Heart left ventricle (tissue), 16 donors: ENCODE measurements at regions of chr4 and their contacts with region 1.

Region 1: GRCh38 chr4:94621491-94622080 is 136.2 kb upstream of the BMPR1B start:
- DNase-seq: no peak
- ATAC-seq: peak in 1 of 4 donors; percentile 25
- H3K4me3 ChIP-seq: no peak overlapping the region
- H3K27ac ChIP-seq: no peak overlapping the region
- H3K4me1 ChIP-seq: peaks cover 0 to 14% (median 4%) of the 10 kb centered on the region in 12 donors
- H3K27me3 ChIP-seq: no peaks in the 10 kb centered on the region
- CTCF ChIP-seq: peak; percentile 63 to 84 (median 76)
- POLR2A ChIP-seq: no peak

Region 2: GRCh38 chr4:94304365-94304971 is 317.1 kb before region 1 on chr4:
- intact Hi-C with region 1: loop called in 1 of 10 experiments (anchors 10 kb)
- DNase-seq: no peak
- ATAC-seq: peak in 1 of 4 donors; percentile 70
- H3K4me3 ChIP-seq: no peak overlapping the region
- H3K27ac ChIP-seq: no peak overlapping the region
- H3K4me1 ChIP-seq: peaks cover 0 to 17% (median 5%) of the 10 kb centered on the region in 12 donors
- H3K27me3 ChIP-seq: no peaks in the 10 kb centered on the region
- CTCF ChIP-seq: peak; percentile 39 to 71 (median 54)
- POLR2A ChIP-seq: no peak

Region 3: GRCh38 chr4:94690851-94691254 is 69.3 kb after region 1 on chr4:
- intact Hi-C with region 1: no loop called
- DNase-seq: no peak
- ATAC-seq: no peak
- H3K4me3 ChIP-seq: no peak overlapping the region
- H3K27ac ChIP-seq: no peak overlapping the region
- H3K4me1 ChIP-seq: no peaks in the 10 kb centered on the region
- H3K27me3 ChIP-seq: no peaks in the 10 kb centered on the region
- CTCF ChIP-seq: no peak
- POLR2A ChIP-seq: no peak

Region 4: DNA sequence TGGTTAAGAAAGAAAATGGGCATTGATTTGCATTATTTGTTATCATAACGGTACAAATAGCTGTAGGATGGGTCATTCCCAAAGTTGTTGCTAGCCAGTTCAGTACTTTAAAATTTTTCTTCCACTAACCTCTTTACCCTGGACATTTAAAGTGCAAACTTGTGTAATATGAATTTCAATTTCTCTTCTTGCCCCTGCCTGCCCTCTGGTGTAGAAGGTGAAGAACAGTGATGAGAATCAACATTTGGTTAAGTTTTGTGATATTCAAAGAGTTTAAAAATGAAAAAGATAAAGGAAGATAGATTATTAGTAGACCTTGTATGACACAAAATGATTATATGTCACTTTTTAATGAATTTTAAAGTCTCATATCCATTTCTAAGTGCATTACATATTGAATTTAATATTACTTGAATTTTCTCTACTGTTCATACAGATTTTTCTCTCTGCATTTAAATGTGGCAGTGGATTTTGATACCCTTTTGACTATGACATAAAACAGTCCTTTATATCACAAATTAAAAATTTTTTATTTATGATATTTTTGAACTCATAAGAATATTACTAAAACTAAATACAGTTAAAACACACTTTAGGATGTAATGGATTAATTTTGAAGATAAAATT is 473.9 kb after region 1 on chr4:
- intact Hi-C with region 1: loop called in 3 of 10 experiments (anchors 5 to 10 kb)
- DNase-seq: no peak
- ATAC-seq: peak in 2 of 4 donors; percentile 53 to 59
- H3K4me3 ChIP-seq: no peak overlapping the region
- H3K27ac ChIP-seq: no peak overlapping the region
- H3K4me1 ChIP-seq: no peaks in the 10 kb centered on the region
- H3K27me3 ChIP-seq: peaks cover 0 to 3% (median 0%) of the 10 kb centered on the region in 9 donors
- CTCF ChIP-seq: peak in 10 of 12 donors; percentile 25 to 64 (median 48)
- POLR2A ChIP-seq: no peak

Region 5: DNA sequence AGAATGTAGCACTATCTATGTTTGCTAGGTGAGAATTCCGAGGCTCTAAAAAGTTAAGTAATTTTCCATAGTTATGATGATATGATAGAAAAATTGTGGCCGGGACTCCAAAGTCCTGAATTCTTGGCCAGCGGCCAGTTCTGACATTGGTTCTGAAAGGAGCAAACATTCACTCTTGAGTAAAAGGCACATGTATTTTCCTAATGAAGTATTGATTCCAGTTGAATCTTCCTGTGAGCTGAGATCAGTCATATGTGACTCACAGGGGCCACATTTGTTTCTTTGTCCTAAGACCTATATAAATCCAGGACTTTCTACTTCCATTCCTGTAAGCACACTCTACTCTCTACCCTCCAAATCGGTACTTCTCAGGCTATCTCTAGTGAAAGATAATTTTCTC is 486.0 kb after region 1 on chr4:
- intact Hi-C with region 1: loop called in 1 of 10 experiments (anchors 10 kb)
- DNase-seq: peak in 1 of 5 donors; percentile 34
- ATAC-seq: no peak
- H3K4me3 ChIP-seq: no peak overlapping the region
- H3K27ac ChIP-seq: no peak overlapping the region
- H3K4me1 ChIP-seq: peaks cover 0 to 20% (median 0%) of the 10 kb centered on the region in 12 donors
- H3K27me3 ChIP-seq: no peaks in the 10 kb centered on the region
- CTCF ChIP-seq: no peak
- POLR2A ChIP-seq: no peak

Region 6: GRCh38 chr4:95124906-95125504 is 503.4 kb after region 1 on chr4:
- intact Hi-C with region 1: loop called in 4 of 10 experiments (anchors 2 to 10 kb)
- DNase-seq: peak in 1 of 5 donors; percentile 10
- ATAC-seq: peak in 3 of 4 donors; percentile 62 to 67 (median 64)
- H3K4me3 ChIP-seq: no peak overlapping the region
- H3K27ac ChIP-seq: no peak overlapping the region
- H3K4me1 ChIP-seq: peaks cover 0 to 9% (median 0%) of the 10 kb centered on the region in 12 donors
- H3K27me3 ChIP-seq: no peaks in the 10 kb centered on the region
- CTCF ChIP-seq: peak in 11 of 12 donors; percentile 24 to 56 (median 41)
- POLR2A ChIP-seq: no peak